SK-N-SH (cell line): ENCODE measurements at regions of chr7 and their contacts with region 1.

Region 1: DNA sequence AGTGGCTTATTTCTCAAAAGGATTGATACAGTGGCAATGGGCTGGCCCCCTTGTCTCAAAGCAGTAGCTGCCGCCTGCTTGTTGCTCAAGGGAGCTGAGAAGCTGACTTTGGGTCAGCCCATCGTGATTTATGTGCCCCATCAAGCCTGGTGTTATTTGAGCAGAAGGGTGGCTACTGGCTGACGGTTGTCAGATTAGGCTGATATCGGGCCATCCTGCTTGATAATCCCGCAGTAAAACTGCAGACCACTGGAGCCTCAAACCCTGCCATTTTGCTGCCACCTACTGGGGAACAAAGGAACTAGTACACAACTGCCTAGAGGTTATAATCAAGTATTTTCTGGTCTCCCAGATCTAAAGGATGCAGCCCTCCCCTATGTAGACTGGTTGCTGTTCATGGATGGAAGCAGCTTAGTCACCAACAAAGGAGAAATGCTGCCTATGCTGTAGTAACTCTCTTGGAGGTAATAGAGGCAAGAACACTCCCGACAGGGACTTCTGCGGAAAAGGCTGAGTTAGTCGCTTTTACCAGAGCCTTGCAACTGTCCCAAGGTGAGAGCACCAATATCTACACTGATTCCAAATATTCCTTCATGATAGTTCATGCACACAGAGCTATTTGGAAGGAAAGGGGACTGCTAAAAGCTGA is 65.9 kb upstream of the ZNF92 start:
- DNase-seq: peak; percentile 77
- H3K4me3 ChIP-seq: peak overlapping the region in 1 of 2 experiments; percentile 16; a peak in 2 of 4 replicates
- H3K27ac ChIP-seq: no peak overlapping the region
- H3K4me1 ChIP-seq: peaks cover 0 to 14% of the 10 kb centered on the region in 2 experiments; a peak in 2 of 4 replicates
- H3K27me3 ChIP-seq: no peaks in the 10 kb centered on the region
- CTCF ChIP-seq: peak; percentile 97
- EP300 ChIP-seq: no peak
- RAD21 ChIP-seq: peak; percentile 100

Region 2: GRCh38 chr7:64951250-64951848 is 356.4 kb before region 1 on chr7:
- CTCF ChIA-PET with region 1: interaction called, 22 read pairs
- POLR2A ChIA-PET with region 1: no interaction called
- DNase-seq: peak; percentile 66
- H3K4me3 ChIP-seq: no peak overlapping the region; a peak in 1 of 4 replicates
- H3K27ac ChIP-seq: no peak overlapping the region
- H3K4me1 ChIP-seq: peaks cover 0 to 18% of the 10 kb centered on the region in 2 experiments; a peak in 2 of 4 replicates
- H3K27me3 ChIP-seq: peaks cover 18% of the 10 kb centered on the region
- CTCF ChIP-seq: peak; percentile 96
- EP300 ChIP-seq: no peak
- RAD21 ChIP-seq: peak; percentile 95

Region 3: GRCh38 chr7:65225422-65226006 is 82.3 kb before region 1 on chr7:
- CTCF ChIA-PET with region 1: interaction called, 181 read pairs
- POLR2A ChIA-PET with region 1: no interaction called
- DNase-seq: no peak
- H3K4me3 ChIP-seq: no peak overlapping the region
- H3K27ac ChIP-seq: no peak overlapping the region
- H3K4me1 ChIP-seq: no peaks in the 10 kb centered on the region
- H3K27me3 ChIP-seq: no peaks in the 10 kb centered on the region
- CTCF ChIP-seq: no peak
- EP300 ChIP-seq: no peak
- RAD21 ChIP-seq: no peak

Region 4: GRCh38 chr7:65239707-65240352 is 67.9 kb before region 1 on chr7:
- CTCF ChIA-PET with region 1: interaction called, 32 read pairs
- POLR2A ChIA-PET with region 1: no interaction called
- DNase-seq: peak; percentile 98
- H3K4me3 ChIP-seq: peak overlapping the region; percentile 57 to 75
- H3K27ac ChIP-seq: peak overlapping the region in 1 of 2 experiments; percentile 71; a peak in 2 of 4 replicates
- H3K4me1 ChIP-seq: peaks cover 0 to 22% of the 10 kb centered on the region in 2 experiments; a peak in 2 of 4 replicates
- H3K27me3 ChIP-seq: peaks cover 6% of the 10 kb centered on the region; the same call in 1 of the 2 replicates
- CTCF ChIP-seq: no peak
- EP300 ChIP-seq: no peak
- RAD21 ChIP-seq: no peak

Region 5: GRCh38 chr7:65269150-65269856 is 38.5 kb before region 1 on chr7:
- CTCF ChIA-PET with region 1: interaction called, 20 read pairs
- POLR2A ChIA-PET with region 1: no interaction called
- DNase-seq: peak; percentile 98
- H3K4me3 ChIP-seq: peak overlapping the region; percentile 73 to 79
- H3K27ac ChIP-seq: peak overlapping the region in 1 of 2 experiments; percentile 67; a peak in 2 of 4 replicates
- H3K4me1 ChIP-seq: peaks cover 0 to 16% of the 10 kb centered on the region in 2 experiments; a peak in 1 of 4 replicates
- H3K27me3 ChIP-seq: no peaks in the 10 kb centered on the region
- CTCF ChIP-seq: no peak
- EP300 ChIP-seq: no peak
- RAD21 ChIP-seq: no peak; the same call in 1 of the 2 replicates

Region 6: GRCh38 chr7:65325793-65326432 is 18.1 kb after region 1 on chr7:
- CTCF ChIA-PET with region 1: interaction called, 31 read pairs
- POLR2A ChIA-PET with region 1: no interaction called
- DNase-seq: no peak
- H3K4me3 ChIP-seq: no peak overlapping the region
- H3K27ac ChIP-seq: no peak overlapping the region
- H3K4me1 ChIP-seq: no peaks in the 10 kb centered on the region; a peak in 1 of 4 replicates
- H3K27me3 ChIP-seq: no peaks in the 10 kb centered on the region
- CTCF ChIP-seq: no peak
- EP300 ChIP-seq: no peak
- RAD21 ChIP-seq: no peak